B cell (primary cell): ENCODE measurements at regions of chr12 and their contacts with region 1.

Region 1: GRCh38 chr12:53065975-53066931 is 12.9 kb downstream of the SPRYD3 start:
- DNase-seq: peak; percentile 77
- ATAC-seq: peak; percentile 75
- H3K4me3 ChIP-seq: no peak overlapping the region
- H3K4me3 Mint-ChIP-seq: no peak overlapping the region
- H3K27ac ChIP-seq: no peak overlapping the region
- H3K27ac Mint-ChIP-seq: peak overlapping the region; percentile 26
- H3K4me1 ChIP-seq: peaks cover 0 to 2% of the 10 kb centered on the region in 2 donors
- H3K4me1 Mint-ChIP-seq: peaks cover 5% of the 10 kb centered on the region
- H3K27me3 ChIP-seq: no peaks in the 10 kb centered on the region
- H3K27me3 Mint-ChIP-seq: no peaks in the 10 kb centered on the region
- CTCF ChIP-seq: peak; percentile 87

Region 2: GRCh38 chr12:52551216-52551865 is 514.9 kb before region 1 on chr12:
- CTCF ChIA-PET with region 1: no interaction called
- POLR2A ChIA-PET with region 1: no interaction called
- intact Hi-C with region 1: no loop called
- DNase-seq: no peak
- ATAC-seq: no peak
- H3K4me3 ChIP-seq: no peak overlapping the region
- H3K4me3 Mint-ChIP-seq: no peak overlapping the region
- H3K27ac ChIP-seq: no peak overlapping the region
- H3K27ac Mint-ChIP-seq: no peak overlapping the region
- H3K4me1 ChIP-seq: no peaks in the 10 kb centered on the region
- H3K4me1 Mint-ChIP-seq: no peaks in the 10 kb centered on the region
- H3K27me3 ChIP-seq: peaks cover 0 to 2% (median 0%) of the 10 kb centered on the region in 4 experiments
- H3K27me3 Mint-ChIP-seq: peaks cover 22% of the 10 kb centered on the region
- CTCF ChIP-seq: no peak

Region 3: DNA sequence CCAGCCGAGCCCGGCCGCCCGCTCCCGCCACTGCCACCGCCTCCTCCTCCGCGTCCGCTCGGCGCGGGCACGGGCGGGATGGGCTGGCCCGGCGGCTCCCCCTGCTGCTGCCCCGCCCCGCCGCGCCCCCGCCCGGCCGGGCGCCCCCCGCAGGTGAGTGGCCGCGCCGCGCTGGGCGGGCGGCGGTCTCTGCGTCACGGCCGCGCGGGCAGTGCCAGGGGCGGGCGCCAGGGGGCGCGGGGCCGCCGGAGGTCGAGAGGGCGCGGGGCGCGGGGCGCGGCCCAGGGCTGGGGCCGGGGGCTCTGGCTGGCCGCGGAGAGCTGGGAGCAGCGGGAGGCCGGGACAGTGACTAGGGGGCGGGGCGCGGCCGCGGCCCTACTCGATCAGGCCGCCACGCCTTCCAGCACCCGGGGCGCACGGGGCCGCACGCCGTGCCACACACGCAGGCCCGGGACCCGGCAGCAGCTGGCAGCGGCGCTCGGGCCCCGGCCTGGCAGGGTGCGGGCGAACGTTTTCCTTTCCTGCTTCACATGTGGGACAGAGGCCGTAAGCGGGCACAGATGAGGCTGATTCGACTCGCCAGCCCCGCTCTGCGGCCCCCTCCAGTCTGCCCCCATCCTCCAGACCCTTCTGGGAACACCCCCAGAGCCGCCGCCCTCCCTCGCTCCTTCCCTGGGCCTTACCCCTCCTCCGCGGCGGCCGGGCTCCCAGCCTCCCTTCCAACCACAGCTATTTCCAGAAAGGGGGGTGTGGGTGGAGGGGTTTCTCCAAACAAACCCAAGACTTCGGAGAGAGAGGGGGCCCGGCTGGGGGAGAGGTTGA is 18.8 kb before region 1 on chr12:
- CTCF ChIA-PET with region 1: interaction called, 17 read pairs
- POLR2A ChIA-PET with region 1: no interaction called
- intact Hi-C with region 1: no loop called
- DNase-seq: peak; percentile 86
- ATAC-seq: peak; percentile 91
- H3K4me3 ChIP-seq: peak overlapping the region in 4 of 5 experiments; percentile 73 to 92 (median 84)
- H3K4me3 Mint-ChIP-seq: peak overlapping the region; percentile 69
- H3K27ac ChIP-seq: peak overlapping the region; percentile 38 to 65
- H3K27ac Mint-ChIP-seq: peak overlapping the region; percentile 68
- H3K4me1 ChIP-seq: peaks cover 13 to 17% of the 10 kb centered on the region in 2 donors
- H3K4me1 Mint-ChIP-seq: peaks cover 9% of the 10 kb centered on the region
- H3K27me3 ChIP-seq: peaks cover 0 to 2% (median 0%) of the 10 kb centered on the region in 4 experiments
- H3K27me3 Mint-ChIP-seq: no peaks in the 10 kb centered on the region
- CTCF ChIP-seq: peak; percentile 15

Region 4: DNA sequence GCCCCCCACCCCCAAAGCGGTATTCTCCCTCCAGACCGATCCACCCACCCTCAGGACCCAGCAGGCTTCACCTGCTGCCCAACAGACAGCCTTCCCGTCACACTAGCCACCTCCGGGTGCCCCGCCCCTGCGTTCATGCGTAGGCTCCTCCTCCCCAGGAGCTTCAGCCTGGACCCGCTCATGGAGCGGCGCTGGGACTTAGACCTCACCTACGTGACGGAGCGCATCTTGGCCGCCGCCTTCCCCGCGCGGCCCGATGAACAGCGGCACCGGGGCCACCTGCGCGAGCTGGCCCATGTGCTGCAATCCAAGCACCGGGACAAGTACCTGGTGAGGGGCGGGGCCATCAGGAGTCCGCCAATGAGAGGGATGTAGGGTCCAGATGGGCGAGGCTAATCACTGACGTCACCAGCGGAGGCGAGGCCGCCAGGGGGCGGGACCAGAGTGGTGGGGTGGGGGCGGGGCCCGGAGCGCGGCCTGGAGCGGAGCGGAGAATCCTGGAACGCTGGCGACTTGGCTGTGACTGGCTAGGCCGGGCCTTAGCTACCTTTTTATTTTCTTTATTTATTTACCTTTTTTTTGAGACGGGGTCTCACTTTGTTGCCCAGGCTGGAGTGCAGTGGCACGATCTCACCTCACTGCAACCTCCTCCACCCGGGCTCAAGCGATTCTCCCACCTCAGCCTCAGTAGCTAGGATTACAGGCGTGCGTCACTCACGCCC is 12.0 kb before region 1 on chr12:
- CTCF ChIA-PET with region 1: interaction called, 59 read pairs
- POLR2A ChIA-PET with region 1: no interaction called
- intact Hi-C with region 1: no loop called
- DNase-seq: peak; percentile 97
- ATAC-seq: peak; percentile 97
- H3K4me3 ChIP-seq: peak overlapping the region; percentile 36 to 87 (median 75)
- H3K4me3 Mint-ChIP-seq: peak overlapping the region; percentile 98
- H3K27ac ChIP-seq: peak overlapping the region; percentile 52 to 65
- H3K27ac Mint-ChIP-seq: peak overlapping the region; percentile 91
- H3K4me1 ChIP-seq: peaks cover 6 to 15% of the 10 kb centered on the region in 2 donors
- H3K4me1 Mint-ChIP-seq: peaks cover 14% of the 10 kb centered on the region
- H3K27me3 ChIP-seq: peaks cover 0 to 7% (median 0%) of the 10 kb centered on the region in 4 experiments
- H3K27me3 Mint-ChIP-seq: no peaks in the 10 kb centered on the region
- CTCF ChIP-seq: no peak

Region 5: DNA sequence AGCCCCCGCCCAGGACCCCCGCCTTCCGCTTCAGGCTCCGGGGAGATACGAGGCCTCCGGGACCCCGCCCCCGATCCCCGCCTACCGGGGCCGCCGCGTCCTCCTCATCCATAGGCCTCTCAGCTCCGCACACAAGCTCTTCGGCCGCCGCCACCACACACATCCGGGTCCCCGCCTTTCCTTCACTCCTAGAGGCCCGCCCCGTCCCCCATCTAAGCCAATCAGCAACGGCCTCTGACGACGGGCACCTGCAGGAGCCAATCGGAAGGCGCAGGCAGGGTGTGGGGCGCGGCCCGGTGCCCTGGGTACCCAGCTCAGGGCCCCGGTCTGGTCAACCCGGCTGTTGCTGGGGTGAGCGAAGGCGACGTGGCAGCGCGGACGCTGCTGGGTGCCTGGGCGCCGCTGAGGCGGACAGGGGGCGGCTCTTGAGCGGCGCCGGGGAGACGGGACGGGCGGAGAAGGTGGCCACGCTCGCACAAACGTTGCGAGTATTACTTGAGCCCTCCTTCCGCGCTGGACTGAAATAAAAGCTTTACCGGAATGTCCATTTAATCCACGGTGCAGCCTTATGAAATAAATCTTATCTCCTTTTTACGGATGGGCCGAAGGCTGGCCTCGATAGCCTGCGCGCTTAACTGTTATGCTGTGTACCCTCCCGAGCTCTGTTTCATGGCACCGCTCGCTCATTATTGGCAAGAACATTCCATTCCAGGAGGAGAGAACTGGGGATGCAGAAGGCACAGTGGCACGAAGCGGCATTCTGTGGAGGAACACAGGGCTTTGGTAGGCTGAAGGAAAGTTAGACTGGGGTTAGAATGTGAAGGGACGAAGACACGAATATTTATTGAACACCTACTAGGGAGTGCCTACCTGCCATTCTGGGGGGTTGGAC is 13.2 kb after region 1 on chr12 and contains the start of gene SPRYD3:
- CTCF ChIA-PET with region 1: interaction called, 62 read pairs
- POLR2A ChIA-PET with region 1: interaction called, 7 read pairs
- intact Hi-C with region 1: loop called (anchors 1 kb)
- DNase-seq: peak; percentile 97
- ATAC-seq: peak; percentile 98
- H3K4me3 ChIP-seq: peak within 1 kb of the TSS; percentile 65 to 98 (median 80)
- H3K4me3 Mint-ChIP-seq: peak within 1 kb of the TSS; percentile 95
- H3K27ac ChIP-seq: peak within 1 kb of the TSS; percentile 51 to 75
- H3K27ac Mint-ChIP-seq: peak within 1 kb of the TSS; percentile 95
- H3K4me1 ChIP-seq: peaks cover 10 to 17% of the 10 kb centered on the region in 2 donors
- H3K4me1 Mint-ChIP-seq: peaks cover 28% of the 10 kb centered on the region
- H3K27me3 ChIP-seq: peaks cover 0 to 8% (median 0%) of the 10 kb centered on the region in 4 experiments
- H3K27me3 Mint-ChIP-seq: peaks cover 4% of the 10 kb centered on the region
- CTCF ChIP-seq: no peak
- total RNA-seq, gene SPRYD3: 39.8 and 43.3 TPM in 2 replicates

Region 6: GRCh38 chr12:53098982-53099651 is 32.9 kb after region 1 on chr12:
- CTCF ChIA-PET with region 1: interaction called, 344 read pairs
- POLR2A ChIA-PET with region 1: no interaction called
- intact Hi-C with region 1: loop called (anchors 1 kb)
- DNase-seq: peak; percentile 87
- ATAC-seq: peak; percentile 68
- H3K4me3 ChIP-seq: no peak overlapping the region
- H3K4me3 Mint-ChIP-seq: peak overlapping the region; percentile 90
- H3K27ac ChIP-seq: no peak overlapping the region
- H3K27ac Mint-ChIP-seq: peak overlapping the region; percentile 59
- H3K4me1 ChIP-seq: peaks cover 37 to 46% of the 10 kb centered on the region in 2 donors
- H3K4me1 Mint-ChIP-seq: peaks cover 42% of the 10 kb centered on the region
- H3K27me3 ChIP-seq: peaks cover 0 to 18% (median 7%) of the 10 kb centered on the region in 4 experiments
- H3K27me3 Mint-ChIP-seq: peaks cover 14% of the 10 kb centered on the region
- CTCF ChIP-seq: peak; percentile 97

Region 7: GRCh38 chr12:53200458-53201176 is 134.4 kb after region 1 on chr12:
- CTCF ChIA-PET with region 1: interaction called, 30 read pairs
- POLR2A ChIA-PET with region 1: interaction called, 3 read pairs
- intact Hi-C with region 1: loop called (anchors 5 kb)
- DNase-seq: peak; percentile 71
- ATAC-seq: peak; percentile 59
- H3K4me3 ChIP-seq: peak overlapping the region in 3 of 5 experiments; percentile 17 to 54 (median 23)
- H3K4me3 Mint-ChIP-seq: peak overlapping the region; percentile 70
- H3K27ac ChIP-seq: peak overlapping the region; percentile 39 to 58
- H3K27ac Mint-ChIP-seq: peak overlapping the region; percentile 80
- H3K4me1 ChIP-seq: peaks cover 79 to 86% of the 10 kb centered on the region in 2 donors
- H3K4me1 Mint-ChIP-seq: peaks cover 68% of the 10 kb centered on the region
- H3K27me3 ChIP-seq: no peaks in the 10 kb centered on the region
- H3K27me3 Mint-ChIP-seq: no peaks in the 10 kb centered on the region
- CTCF ChIP-seq: no peak

Region 8: DNA sequence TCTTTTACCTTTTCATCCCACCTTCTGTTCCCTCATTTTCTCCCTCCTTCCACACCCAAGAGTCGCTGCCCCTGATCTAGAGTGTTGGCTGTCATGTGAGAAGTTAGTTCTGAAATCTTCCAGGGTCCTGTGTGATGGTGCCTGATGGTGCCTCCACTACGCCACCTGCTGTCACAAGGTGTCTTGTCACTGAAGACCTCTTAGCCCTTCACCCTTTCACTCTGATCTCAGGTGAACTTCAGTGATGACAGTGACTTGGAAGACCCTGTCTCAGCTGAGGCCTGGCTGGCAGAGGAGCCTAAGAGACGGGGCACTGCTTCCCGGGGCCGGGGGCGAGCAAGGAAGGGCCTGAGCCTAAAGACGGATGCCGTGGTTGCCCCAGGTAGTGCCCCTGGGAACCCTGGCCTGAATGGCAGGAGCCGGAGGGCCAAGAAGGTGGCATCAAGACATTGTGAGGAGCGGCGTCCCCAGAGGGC is 221.5 kb after region 1 on chr12:
- CTCF ChIA-PET with region 1: interaction called, 17 read pairs
- POLR2A ChIA-PET with region 1: no interaction called
- intact Hi-C with region 1: no loop called
- DNase-seq: peak; percentile 85
- ATAC-seq: peak; percentile 96
- H3K4me3 ChIP-seq: no peak overlapping the region
- H3K4me3 Mint-ChIP-seq: no peak overlapping the region
- H3K27ac ChIP-seq: no peak overlapping the region
- H3K27ac Mint-ChIP-seq: peak overlapping the region; percentile 28
- H3K4me1 ChIP-seq: no peaks in the 10 kb centered on the region
- H3K4me1 Mint-ChIP-seq: peaks cover 5% of the 10 kb centered on the region
- H3K27me3 ChIP-seq: no peaks in the 10 kb centered on the region
- H3K27me3 Mint-ChIP-seq: no peaks in the 10 kb centered on the region
- CTCF ChIP-seq: peak; percentile 82

Region 9: DNA sequence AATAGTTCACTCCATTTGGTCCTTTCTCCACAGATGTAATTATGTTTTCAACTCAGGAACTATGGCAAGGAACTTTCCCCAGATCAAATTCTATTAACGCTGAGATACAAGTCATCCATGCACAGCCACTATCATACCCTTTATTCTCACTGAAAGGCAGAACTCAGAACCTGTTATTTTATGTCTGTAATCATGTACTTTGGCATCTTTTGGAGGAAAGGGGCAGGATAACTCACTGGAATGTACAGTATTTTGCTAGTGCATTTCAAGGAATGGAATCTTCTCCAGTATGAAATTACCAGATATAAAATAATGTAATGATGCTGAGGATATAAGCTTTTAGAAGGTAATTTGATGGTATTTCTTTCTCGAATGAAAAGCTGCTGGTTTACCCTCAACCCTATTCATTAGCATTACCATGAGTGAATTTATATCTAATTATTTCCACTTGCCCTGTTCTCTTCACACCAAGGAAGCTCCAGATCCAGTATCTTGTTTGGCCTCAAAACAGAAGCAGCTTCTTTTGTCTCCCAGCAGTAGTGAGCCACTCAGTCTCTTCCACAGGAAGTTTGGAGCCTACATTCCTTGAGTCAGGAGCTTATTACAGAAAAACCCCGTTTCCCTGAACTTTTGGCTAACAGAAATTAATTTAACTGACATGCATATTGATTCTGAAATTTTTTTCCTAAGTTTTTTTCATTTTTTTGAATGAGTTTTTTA is 347.4 kb after region 1 on chr12:
- CTCF ChIA-PET with region 1: no interaction called
- POLR2A ChIA-PET with region 1: no interaction called
- intact Hi-C with region 1: no loop called
- DNase-seq: no peak
- ATAC-seq: no peak
- H3K4me3 ChIP-seq: no peak overlapping the region
- H3K4me3 Mint-ChIP-seq: no peak overlapping the region
- H3K27ac ChIP-seq: peak overlapping the region in 1 of 2 donors; percentile 41
- H3K27ac Mint-ChIP-seq: peak overlapping the region; percentile 67
- H3K4me1 ChIP-seq: peaks cover 21 to 25% of the 10 kb centered on the region in 2 donors
- H3K4me1 Mint-ChIP-seq: peaks cover 47% of the 10 kb centered on the region
- H3K27me3 ChIP-seq: no peaks in the 10 kb centered on the region
- H3K27me3 Mint-ChIP-seq: no peaks in the 10 kb centered on the region
- CTCF ChIP-seq: no peak